Cardiac septum (tissue), 1 donor: ENCODE measurements at regions of chr4 and their contacts with region 1.

Region 1: DNA sequence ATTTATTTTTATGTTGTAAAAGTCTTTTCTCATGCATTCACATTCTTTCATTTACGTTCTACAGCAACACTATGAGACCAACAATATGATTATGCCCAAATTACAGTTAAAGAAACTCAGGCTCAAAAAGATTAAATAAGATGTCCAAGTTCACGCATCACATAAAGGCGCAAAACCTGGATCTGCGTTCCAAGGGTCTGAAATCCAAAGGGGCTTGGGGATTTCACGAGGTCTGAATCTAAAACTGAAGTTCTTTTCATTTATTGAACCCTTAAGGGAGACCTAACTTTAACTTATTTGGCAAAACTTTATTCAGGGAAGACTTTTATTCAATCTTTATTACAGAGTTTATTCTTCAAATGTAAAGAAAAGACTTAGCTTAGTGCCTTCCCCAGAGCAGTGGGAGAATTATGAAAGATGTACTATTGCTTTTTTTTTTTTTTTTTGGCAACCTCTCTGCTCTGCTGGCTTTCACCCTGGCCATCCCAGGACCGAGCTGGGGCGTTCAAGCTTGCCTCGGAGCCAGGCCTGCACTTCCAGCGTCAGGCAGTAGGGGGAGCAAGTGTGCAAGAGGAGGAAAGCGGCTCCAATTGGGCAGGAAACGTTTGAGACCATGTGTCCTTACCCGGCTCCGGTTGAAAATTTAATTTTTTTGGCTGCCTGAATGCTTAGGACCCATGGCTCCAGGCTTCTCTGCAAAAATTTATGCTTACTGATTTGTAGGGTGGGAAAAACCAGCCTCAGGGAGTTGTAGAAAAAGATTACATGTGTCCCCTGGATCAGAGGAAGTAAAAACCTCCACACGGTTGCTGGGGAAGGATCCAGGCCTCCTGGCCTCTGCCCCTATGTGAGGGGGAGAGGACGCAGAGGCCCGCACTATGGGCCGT is 344.3 kb upstream of the KLF3 start:
- DNase-seq: peak; percentile 96

Region 2: GRCh38 chr4:37977471-37978247 is 342.0 kb before region 1 on chr4:
- intact Hi-C with region 1: loop called (anchors 10 kb)
- DNase-seq: peak; percentile 90

Region 3: DNA sequence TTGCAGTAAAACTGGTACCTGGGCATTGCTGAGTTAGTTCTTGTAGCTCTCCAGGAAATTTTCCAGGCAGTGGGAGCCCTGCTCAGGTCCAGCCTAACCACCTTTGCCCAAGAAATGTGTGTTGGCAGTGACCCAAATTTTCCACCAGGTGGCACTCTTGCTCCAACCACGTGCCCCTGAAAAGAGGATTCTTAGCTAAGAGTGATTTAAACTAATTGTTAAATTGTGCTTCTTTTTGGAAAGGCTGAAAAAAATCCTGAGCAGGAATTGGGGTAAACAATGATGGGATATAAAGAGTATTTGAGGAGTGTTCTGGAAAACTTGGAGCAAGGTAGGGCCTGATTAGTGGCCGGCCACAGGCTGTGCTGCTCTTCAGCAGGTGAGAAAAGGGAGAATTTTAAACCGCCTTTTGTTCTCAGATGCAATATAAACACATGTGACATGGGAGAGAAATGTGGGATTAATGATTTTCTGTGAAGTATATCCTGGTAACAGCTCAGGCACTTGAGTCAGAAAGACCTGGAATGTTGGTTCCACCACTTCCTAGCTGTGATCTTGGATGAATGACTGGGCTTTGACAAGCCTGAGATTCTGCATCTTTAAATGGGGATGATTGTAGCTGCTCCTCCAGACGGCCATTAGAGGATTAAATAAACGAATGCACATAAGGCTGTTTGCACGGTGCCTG is 139.9 kb before region 1 on chr4:
- intact Hi-C with region 1: loop called (anchors 2 kb)
- DNase-seq: peak; percentile 87

Region 4: GRCh38 chr4:38663801-38664705 is 344.4 kb after region 1 on chr4 and contains the start of gene KLF3:
- intact Hi-C with region 1: loop called (anchors 1 kb)
- DNase-seq: peak; percentile 98
- total RNA-seq, gene KLF3: 25.3 TPM

Region 5: DNA sequence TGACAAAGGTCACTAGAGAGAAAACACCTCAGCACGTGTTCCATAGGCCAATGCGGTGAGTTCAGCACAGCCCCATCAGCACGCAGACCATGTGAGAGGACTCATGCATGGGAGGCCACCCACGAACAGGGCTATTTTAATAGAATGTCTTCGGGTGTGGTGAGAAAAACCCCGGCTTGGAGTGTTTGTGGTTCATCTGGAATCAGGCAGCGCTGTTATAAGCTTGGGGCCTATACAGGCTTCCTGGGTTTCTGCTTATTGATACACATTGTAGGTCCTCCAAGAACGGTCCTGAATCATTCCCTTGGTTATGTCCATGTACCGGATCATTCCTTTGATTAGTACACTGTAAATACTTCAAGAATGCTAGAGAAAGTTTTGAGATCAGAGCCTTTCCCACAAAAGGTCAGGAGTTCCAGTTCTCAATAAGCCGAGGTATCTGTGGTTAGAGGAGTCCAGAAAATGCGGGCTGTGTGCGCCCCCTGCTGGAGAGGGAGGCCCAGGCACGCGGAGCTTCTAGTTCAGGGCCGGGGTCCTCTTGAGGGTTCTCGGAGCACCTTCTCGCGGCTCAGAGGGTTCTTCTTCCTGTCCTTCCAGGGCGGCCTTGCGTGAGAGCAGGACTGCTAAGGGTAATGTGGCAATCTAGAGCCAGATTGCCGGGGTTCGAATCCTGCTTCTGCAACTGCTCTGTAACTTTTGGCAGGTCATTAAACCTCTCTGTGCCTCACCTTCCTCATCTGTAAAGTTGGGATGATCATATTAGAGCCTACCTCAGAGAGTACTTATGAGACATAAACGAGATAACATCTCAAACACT is 411.3 kb after region 1 on chr4:
- intact Hi-C with region 1: loop called (anchors 2 kb)
- DNase-seq: peak; percentile 94

Region 6: DNA sequence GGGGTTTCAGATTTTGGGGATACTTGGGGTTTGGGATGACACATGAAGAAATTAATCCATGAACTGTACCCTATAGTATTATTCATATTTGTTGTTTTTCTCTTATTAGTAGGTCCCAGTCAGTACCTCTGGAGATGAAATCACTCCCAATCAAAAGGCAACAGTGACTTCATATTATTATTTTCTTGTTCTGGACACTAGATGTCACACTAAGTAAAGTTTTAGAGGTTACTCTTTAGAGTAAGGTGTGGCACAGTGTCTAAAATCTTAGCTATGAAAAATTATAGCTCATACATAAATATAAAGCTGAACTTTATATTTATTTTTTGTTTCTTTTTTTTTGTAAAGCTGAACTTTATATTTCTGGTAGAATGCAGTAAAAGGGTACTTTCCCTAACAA is 583.0 kb after region 1 on chr4:
- intact Hi-C with region 1: no loop called
- DNase-seq: no peak